ENCODE measurements at regions of chr10 and their contacts with region 1.

Region 1: GRCh38 chr10:32958085-32959005 is at the start of gene ITGB1:
- DNase-seq: peak; percentile 57 to 95
- ATAC-seq: peak; percentile 78 to 81
- H3K4me3 ChIP-seq: peak within 1 kb of the TSS; percentile 74
- H3K27ac ChIP-seq: peak within 1 kb of the TSS; percentile 99 to 100
- H3K4me1 ChIP-seq: peaks cover 42% of the 10 kb centered on the region
- CTCF ChIP-seq: no peak
- EP300 ChIP-seq: peak; percentile 57 to 77; a peak in 3 of 5 replicates
- POLR2A ChIP-seq: peak; percentile 61
- RAD21 ChIP-seq: peak; percentile 8 to 21; a peak in 2 of 5 replicates
- polyA plus RNA-seq, gene ITGB1: 1,667 and 2,408 TPM in 2 replicates

Region 2: DNA sequence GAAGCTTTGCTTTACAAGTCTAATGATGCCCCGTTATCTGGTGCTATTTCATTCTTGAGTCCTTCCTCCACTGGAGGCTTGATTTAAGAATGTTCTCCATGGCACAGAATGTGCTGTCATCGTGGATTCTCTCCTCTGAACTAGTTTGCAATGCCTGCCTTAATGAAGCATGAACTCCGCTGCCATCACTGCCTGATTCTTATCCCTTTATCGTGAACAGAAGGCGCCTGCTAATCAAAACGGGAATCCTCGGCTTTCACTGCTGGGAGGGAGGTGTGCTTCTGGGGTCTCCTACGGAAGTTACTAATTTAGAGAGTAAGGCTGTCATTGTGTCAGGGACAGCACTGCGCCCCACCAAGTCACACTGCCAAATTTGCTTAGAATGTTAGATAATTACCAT is 56.5 kb before region 1 on chr10:
- CTCF ChIA-PET with region 1: no interaction called
- POLR2A ChIA-PET with region 1: no interaction called
- DNase-seq: no peak
- ATAC-seq: no peak
- H3K4me3 ChIP-seq: no peak overlapping the region
- H3K27ac ChIP-seq: no peak overlapping the region
- H3K4me1 ChIP-seq: peaks cover 36% of the 10 kb centered on the region
- CTCF ChIP-seq: no peak
- EP300 ChIP-seq: no peak
- POLR2A ChIP-seq: no peak
- RAD21 ChIP-seq: no peak

Region 3: DNA sequence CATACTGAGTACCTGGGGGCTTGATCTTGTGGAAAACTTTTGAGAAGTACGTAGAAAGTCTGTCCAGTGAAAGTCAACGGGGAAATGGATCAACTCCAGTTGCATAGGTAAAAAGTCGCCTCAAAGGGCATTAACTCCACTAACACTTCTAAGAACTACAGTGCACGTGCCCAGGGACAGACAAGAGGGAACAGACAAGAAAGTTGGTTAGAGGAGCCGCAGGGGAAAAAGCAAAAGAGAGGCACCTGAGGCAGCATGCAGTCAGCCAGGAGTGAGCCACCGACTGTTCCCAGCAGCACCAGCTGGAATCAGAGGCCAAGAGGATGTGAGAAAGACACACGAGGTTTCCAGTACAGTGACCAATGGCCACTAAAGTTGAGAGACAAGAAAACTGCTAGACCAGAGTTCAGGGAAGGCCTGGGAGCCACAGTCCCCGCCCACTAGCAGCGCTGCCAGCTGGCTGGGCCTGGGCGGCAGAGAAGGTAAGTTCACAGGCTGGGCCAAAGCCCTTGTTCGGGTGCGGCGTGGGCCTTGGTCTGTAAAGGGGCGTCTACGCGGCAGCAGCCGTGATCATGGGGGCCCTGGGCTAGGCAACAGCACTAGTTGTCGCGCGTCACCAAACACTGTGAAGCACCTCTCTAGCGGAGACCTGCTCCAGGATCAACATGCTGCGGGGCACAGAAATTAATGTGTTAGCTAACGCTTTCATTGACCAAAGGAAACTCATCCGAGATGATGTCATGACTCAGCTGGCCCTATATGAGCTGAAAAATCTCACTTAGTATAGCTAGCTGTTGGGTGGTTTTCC is 14.3 kb before region 1 on chr10:
- CTCF ChIA-PET with region 1: interaction called, 13 read pairs
- POLR2A ChIA-PET with region 1: interaction called, 4 read pairs
- DNase-seq: peak in 1 of 2 experiments; percentile 69
- ATAC-seq: peak; percentile 60 to 69
- H3K4me3 ChIP-seq: peak overlapping the region; percentile 16; the same call in 2 of the 3 replicates
- H3K27ac ChIP-seq: peak overlapping the region; percentile 81 to 100
- H3K4me1 ChIP-seq: peaks cover 100% of the 10 kb centered on the region
- CTCF ChIP-seq: no peak
- EP300 ChIP-seq: no peak
- POLR2A ChIP-seq: peak; percentile 10; the same call in 1 of the 2 replicates
- RAD21 ChIP-seq: no peak

Region 4: GRCh38 chr10:32971536-32972091 is 13.3 kb after region 1 on chr10:
- CTCF ChIA-PET with region 1: interaction called, 3 read pairs
- POLR2A ChIA-PET with region 1: interaction called, 10 read pairs
- DNase-seq: peak in 1 of 2 experiments; percentile 73
- ATAC-seq: peak; percentile 71 to 79
- H3K4me3 ChIP-seq: no peak overlapping the region; the same call in 2 of the 3 replicates
- H3K27ac ChIP-seq: peak overlapping the region; percentile 89 to 94
- H3K4me1 ChIP-seq: peaks cover 59% of the 10 kb centered on the region
- CTCF ChIP-seq: no peak
- EP300 ChIP-seq: no peak
- POLR2A ChIP-seq: no peak
- RAD21 ChIP-seq: no peak

Region 5: DNA sequence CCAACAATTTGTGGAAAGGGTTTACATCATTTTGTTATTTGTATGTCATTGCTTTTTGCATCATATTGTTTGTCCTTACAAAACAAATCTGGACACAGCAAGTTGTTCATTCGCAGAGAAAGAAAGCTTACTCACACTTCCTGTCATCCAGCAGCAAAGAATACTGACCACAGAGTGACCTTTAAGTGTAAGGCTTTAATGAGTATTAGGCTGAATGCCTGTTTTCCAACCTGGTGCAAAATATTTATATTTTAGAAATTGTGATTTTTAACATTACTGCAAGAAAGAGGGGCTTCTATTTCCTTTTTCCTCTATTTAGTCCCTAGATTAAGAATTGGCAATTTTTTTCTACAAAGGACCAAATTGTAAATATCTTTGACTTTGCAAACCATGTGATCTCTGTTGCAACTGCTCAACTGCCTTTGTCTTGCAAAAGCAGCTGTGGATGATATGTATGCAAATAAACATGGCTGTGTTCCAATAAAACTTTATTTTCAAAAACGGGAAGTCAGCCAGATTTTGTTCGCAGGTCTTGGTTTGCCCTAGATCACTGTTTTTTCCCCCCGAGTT is 27.5 kb after region 1 on chr10:
- CTCF ChIA-PET with region 1: interaction called, 15 read pairs
- POLR2A ChIA-PET with region 1: interaction called, 103 read pairs
- DNase-seq: peak in 1 of 2 experiments; percentile 97
- ATAC-seq: peak; percentile 48
- H3K4me3 ChIP-seq: peak overlapping the region; percentile 4; the same call in 1 of the 3 replicates
- H3K27ac ChIP-seq: peak overlapping the region; percentile 96 to 99
- H3K4me1 ChIP-seq: peaks cover 72% of the 10 kb centered on the region
- CTCF ChIP-seq: no peak
- EP300 ChIP-seq: peak; percentile 92 to 93; a peak in 4 of 5 replicates
- POLR2A ChIP-seq: no peak
- RAD21 ChIP-seq: peak in 1 of 2 experiments; percentile 11; a peak in 2 of 5 replicates